Transverse colon (tissue), 4 donors: ENCODE measurements at regions of chr3 and their contacts with region 1.

Region 1: DNA sequence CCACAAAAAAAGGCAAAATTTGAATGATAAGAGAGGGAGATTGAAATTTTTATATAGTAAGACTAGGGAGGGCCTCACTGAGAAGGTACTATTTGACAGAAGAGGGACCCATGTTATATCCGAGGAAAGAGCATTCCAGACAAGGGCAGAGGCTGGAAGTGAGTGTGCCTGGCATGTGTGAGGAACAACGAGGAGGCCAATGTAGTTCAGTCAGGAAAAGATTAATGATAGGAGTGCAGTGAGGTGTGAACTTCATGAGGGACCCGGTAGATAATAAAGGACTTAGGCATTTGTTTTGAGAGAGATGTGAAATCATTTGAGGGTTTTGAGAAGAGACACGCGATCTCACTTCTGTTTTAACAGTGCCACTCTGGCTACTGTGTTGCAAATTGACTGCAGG is 36.3 kb downstream of the ASTE1 start:
- DNase-seq: no peak
- H3K4me3 ChIP-seq: no peak overlapping the region
- H3K27ac ChIP-seq: no peak overlapping the region
- H3K4me1 ChIP-seq: no peaks in the 10 kb centered on the region
- H3K27me3 ChIP-seq: no peaks in the 10 kb centered on the region
- CTCF ChIP-seq: no peak
- EP300 ChIP-seq: no peak
- POLR2A ChIP-seq: no peak

Region 2: DNA sequence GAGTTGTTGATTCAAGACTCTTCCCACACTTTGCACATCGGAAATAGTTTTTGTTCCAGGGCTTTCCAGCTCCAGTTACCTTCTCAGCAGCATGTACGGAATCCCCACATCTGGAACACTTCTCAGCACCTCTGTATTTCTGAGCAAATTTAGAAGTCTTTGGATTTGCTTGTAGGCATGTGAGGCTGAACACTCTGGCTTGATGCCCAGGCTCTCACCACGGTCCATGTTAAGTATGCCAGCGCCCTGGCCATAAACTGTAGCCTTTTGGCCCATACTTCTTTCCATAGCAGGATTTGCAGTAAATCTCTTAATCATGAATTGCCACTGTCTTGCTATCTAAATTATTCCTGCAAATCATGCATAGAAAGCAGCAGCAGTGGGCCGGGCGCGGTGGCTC is 72.0 kb before region 1 on chr3:
- in situ Hi-C with region 1: no loop called
- intact Hi-C with region 1: loop called (anchors 2 kb)
- DNase-seq: no peak
- H3K4me3 ChIP-seq: no peak overlapping the region
- H3K27ac ChIP-seq: no peak overlapping the region
- H3K4me1 ChIP-seq: peaks cover 0 to 7% (median 2%) of the 10 kb centered on the region in 4 donors
- H3K27me3 ChIP-seq: no peaks in the 10 kb centered on the region
- CTCF ChIP-seq: no peak
- EP300 ChIP-seq: no peak
- POLR2A ChIP-seq: no peak

Region 3: DNA sequence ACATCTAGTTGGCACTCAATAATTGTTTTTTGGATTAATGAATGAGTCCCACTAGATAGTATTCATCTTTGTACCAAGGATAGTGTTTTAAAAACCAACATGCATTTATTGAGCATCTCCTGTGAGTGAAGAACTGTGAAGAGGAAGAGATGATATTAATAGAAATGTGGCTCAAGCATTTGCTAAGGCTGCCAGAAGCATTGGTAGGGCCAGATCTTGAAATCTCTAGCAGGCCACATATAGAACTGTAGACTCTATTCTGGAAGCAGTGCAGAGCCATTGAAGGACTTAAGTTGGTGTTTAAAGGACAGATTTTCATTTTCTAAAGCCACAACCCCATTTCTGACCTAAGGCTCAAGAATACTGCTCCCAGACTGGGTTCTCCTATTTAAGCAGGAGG is 135.4 kb after region 1 on chr3:
- in situ Hi-C with region 1: no loop called
- intact Hi-C with region 1: no loop called
- DNase-seq: no peak
- H3K4me3 ChIP-seq: no peak overlapping the region
- H3K27ac ChIP-seq: no peak overlapping the region
- H3K4me1 ChIP-seq: no peaks in the 10 kb centered on the region
- H3K27me3 ChIP-seq: no peaks in the 10 kb centered on the region
- CTCF ChIP-seq: no peak
- EP300 ChIP-seq: no peak
- POLR2A ChIP-seq: no peak